ENCODE measurements at regions of chr10 and their contacts with region 1.

Region 1: GRCh38 chr10:30783939-30784500 is 154.5 kb upstream of the LYZL2 start:
- DNase-seq: peak; percentile 90
- ATAC-seq: peak; percentile 86
- H3K4me3 ChIP-seq: peak overlapping the region; percentile 83
- H3K27ac ChIP-seq: peak overlapping the region; percentile 97
- H3K4me1 ChIP-seq: peaks cover 14% of the 10 kb centered on the region
- H3K27me3 ChIP-seq: no peaks in the 10 kb centered on the region
- CTCF ChIP-seq: peak; percentile 82

Region 2: GRCh38 chr10:30709229-30709628 is 74.8 kb before region 1 on chr10:
- intact Hi-C with region 1: no loop called
- DNase-seq: no peak
- ATAC-seq: no peak
- H3K4me3 ChIP-seq: no peak overlapping the region
- H3K27ac ChIP-seq: no peak overlapping the region
- H3K4me1 ChIP-seq: no peaks in the 10 kb centered on the region
- H3K27me3 ChIP-seq: no peaks in the 10 kb centered on the region
- CTCF ChIP-seq: no peak

Region 3: GRCh38 chr10:31031558-31032257 is 247.7 kb after region 1 on chr10 and contains the start of gene ZNF438:
- intact Hi-C with region 1: loop called (anchors 10 kb)
- DNase-seq: peak; percentile 98
- ATAC-seq: peak; percentile 97
- H3K4me3 ChIP-seq: peak within 1 kb of the TSS; percentile 69
- H3K27ac ChIP-seq: peak within 1 kb of the TSS; percentile 100
- H3K4me1 ChIP-seq: peaks cover 41% of the 10 kb centered on the region
- H3K27me3 ChIP-seq: no peaks in the 10 kb centered on the region
- CTCF ChIP-seq: peak; percentile 64
- total RNA-seq, gene ZNF438: 14.4 TPM

Measured in upper lobe of right lung (tissue), 1 donor.